ENCODE measurements at regions of chr22 and their contacts with region 1.

Region 1: DNA sequence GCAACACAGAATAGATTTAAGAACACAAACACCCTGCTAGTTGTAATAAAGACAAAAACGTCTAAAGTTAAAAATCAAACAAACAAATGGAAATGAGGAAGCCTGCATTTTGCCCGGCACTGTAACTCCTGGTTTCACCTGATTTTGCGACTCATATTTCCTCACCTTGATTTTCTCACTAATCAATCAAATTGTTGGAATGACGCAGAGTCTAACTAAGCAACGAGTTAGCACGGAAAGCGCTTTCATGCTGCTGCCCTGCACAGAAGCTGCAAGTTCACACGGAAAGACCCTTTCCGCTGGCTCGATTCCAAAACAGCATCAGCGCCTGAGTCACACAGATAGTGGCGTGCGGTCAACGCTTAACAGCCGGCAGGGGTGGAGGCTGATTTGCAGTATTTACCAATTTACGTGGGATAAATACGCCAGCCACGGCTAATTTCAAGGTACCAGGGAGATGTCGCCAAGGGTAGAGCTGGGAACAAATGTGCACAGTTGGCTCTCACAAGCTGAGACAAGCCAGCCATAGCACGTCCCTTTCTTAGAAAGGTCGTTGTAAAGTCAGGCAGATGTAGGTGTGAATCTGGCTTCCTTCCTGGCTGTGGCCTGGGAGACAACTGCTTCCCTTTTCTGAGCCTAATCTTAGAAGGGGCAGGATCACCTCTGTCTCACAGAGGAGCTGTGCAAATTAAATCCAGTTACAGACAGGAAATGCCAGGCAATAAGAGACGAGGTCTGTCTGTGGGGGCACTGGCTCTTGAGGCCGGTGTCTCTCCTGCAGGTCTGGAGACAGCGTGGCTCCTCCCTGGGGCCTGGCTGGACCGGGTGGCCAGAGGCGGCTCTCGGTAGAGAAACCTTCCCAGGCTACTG is 76.9 kb upstream of the TTLL12 start:
- DNase-seq: peak; percentile 96
- ATAC-seq: peak; percentile 90
- H3K4me3 Mint-ChIP-seq: peak overlapping the region; percentile 68
- H3K27ac Mint-ChIP-seq: peak overlapping the region; percentile 92
- H3K4me1 Mint-ChIP-seq: peaks cover 31% of the 10 kb centered on the region
- H3K27me3 Mint-ChIP-seq: peaks cover 6% of the 10 kb centered on the region

Region 2: GRCh38 chr22:43319661-43320486 is 56.0 kb after region 1 on chr22:
- CTCF ChIA-PET with region 1: no interaction called
- DNase-seq: no peak
- ATAC-seq: no peak
- H3K4me3 Mint-ChIP-seq: no peak overlapping the region
- H3K27ac Mint-ChIP-seq: no peak overlapping the region
- H3K4me1 Mint-ChIP-seq: peaks cover 4% of the 10 kb centered on the region
- H3K27me3 Mint-ChIP-seq: peaks cover 5% of the 10 kb centered on the region

Region 3: GRCh38 chr22:43377896-43378704 is 114.2 kb after region 1 on chr22:
- CTCF ChIA-PET with region 1: interaction called, 14 read pairs
- DNase-seq: peak; percentile 79
- ATAC-seq: peak; percentile 18
- H3K4me3 Mint-ChIP-seq: peak overlapping the region; percentile 49
- H3K27ac Mint-ChIP-seq: peak overlapping the region; percentile 86
- H3K4me1 Mint-ChIP-seq: peaks cover 63% of the 10 kb centered on the region
- H3K27me3 Mint-ChIP-seq: peaks cover 75% of the 10 kb centered on the region